OCI-LY7 (cell line): ENCODE measurements at regions of chr9 and their contacts with region 1.

Region 1: GRCh38 chr9:124868511-124869465 is 6.9 kb downstream of the ARPC5L start:
- DNase-seq: peak; percentile 89
- H3K4me3 ChIP-seq: peak overlapping the region; percentile 79
- H3K27ac ChIP-seq: peak overlapping the region; percentile 88
- H3K4me1 ChIP-seq: peaks cover 53% of the 10 kb centered on the region
- CTCF ChIP-seq: peak; percentile 77

Region 2: DNA sequence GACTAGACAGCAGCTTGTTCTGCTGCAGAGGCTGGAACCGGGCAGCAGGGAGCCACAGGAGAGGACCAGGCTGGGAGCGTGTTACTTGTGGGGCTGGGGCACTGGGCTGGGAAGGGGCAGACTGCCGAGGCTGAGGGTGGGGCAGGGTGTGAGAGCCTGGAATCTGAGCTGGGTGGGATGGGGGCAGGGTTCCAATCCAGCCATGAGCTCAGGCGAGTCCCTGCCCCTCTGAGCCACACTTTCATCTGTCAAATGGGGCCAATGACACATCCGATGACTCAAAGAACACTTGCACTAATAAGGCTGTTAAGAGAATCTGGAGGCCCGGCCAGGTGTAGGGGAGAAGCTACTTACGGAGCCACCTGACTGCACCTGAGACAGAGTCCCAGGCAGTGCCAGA is 34.2 kb before region 1 on chr9:
- CTCF ChIA-PET with region 1: no interaction called
- POLR2A ChIA-PET with region 1: no interaction called
- intact Hi-C with region 1: no loop called
- DNase-seq: no peak
- H3K4me3 ChIP-seq: no peak overlapping the region
- H3K27ac ChIP-seq: no peak overlapping the region
- H3K4me1 ChIP-seq: no peaks in the 10 kb centered on the region
- CTCF ChIP-seq: no peak

Region 3: GRCh38 chr9:124894741-124895170 is 26.0 kb after region 1 on chr9:
- CTCF ChIA-PET with region 1: no interaction called
- POLR2A ChIA-PET with region 1: interaction called, 4 read pairs
- intact Hi-C with region 1: loop called (anchors 2 kb)
- DNase-seq: peak; percentile 83
- H3K4me3 ChIP-seq: no peak overlapping the region
- H3K27ac ChIP-seq: no peak overlapping the region
- H3K4me1 ChIP-seq: peaks cover 8% of the 10 kb centered on the region
- CTCF ChIP-seq: peak; percentile 88

Region 4: DNA sequence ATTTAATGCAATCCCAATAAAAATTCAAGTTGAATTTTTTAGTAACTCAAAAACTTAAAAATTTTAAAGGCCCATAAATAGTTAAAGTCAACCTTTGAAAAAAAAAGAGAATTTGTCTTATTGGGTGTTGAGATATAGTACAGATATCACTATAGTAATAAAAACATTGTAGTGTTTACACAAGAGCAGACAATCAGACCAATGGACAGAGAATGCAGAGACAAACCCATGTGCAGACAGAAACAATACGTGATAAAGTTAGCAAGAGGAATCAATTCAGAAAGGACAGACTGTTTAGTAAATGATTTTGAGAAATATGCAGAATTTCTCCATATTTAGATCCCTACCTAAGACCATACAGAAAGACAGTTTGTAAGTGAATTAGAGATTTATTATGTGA is 38.2 kb after region 1 on chr9:
- CTCF ChIA-PET with region 1: no interaction called
- POLR2A ChIA-PET with region 1: no interaction called
- intact Hi-C with region 1: no loop called
- DNase-seq: no peak
- H3K4me3 ChIP-seq: no peak overlapping the region
- H3K27ac ChIP-seq: no peak overlapping the region
- H3K4me1 ChIP-seq: no peaks in the 10 kb centered on the region
- CTCF ChIP-seq: no peak

Region 5: GRCh38 chr9:124940693-124941453 is 72.1 kb after region 1 on chr9 and contains the start of gene GOLGA1:
- CTCF ChIA-PET with region 1: no interaction called
- POLR2A ChIA-PET with region 1: no interaction called
- intact Hi-C with region 1: loop called (anchors 2 kb)
- DNase-seq: peak; percentile 95
- H3K4me3 ChIP-seq: peak within 1 kb of the TSS; percentile 81
- H3K27ac ChIP-seq: peak within 1 kb of the TSS; percentile 91
- H3K4me1 ChIP-seq: peaks cover 53% of the 10 kb centered on the region
- CTCF ChIP-seq: no peak
- total RNA-seq, gene GOLGA1: 15.1 and 19.2 TPM in 2 replicates

Region 6: GRCh38 chr9:125143375-125144090 is 274.7 kb after region 1 on chr9 and contains the start of gene SCAI:
- CTCF ChIA-PET with region 1: no interaction called
- POLR2A ChIA-PET with region 1: no interaction called
- intact Hi-C with region 1: loop called (anchors 2 kb)
- DNase-seq: peak; percentile 99
- H3K4me3 ChIP-seq: peak within 1 kb of the TSS; percentile 82
- H3K27ac ChIP-seq: peak within 1 kb of the TSS; percentile 40
- H3K4me1 ChIP-seq: peaks cover 22% of the 10 kb centered on the region
- CTCF ChIP-seq: peak; percentile 91
- total RNA-seq, gene SCAI: 23.8 and 25.0 TPM in 2 replicates

Region 7: GRCh38 chr9:125189361-125190289 is 320.8 kb after region 1 on chr9 and contains the start of gene PPP6C:
- CTCF ChIA-PET with region 1: no interaction called
- POLR2A ChIA-PET with region 1: no interaction called
- intact Hi-C with region 1: no loop called
- DNase-seq: peak; percentile 95
- H3K4me3 ChIP-seq: peak within 1 kb of the TSS; percentile 96
- H3K27ac ChIP-seq: peak within 1 kb of the TSS; percentile 74
- H3K4me1 ChIP-seq: peaks cover 48% of the 10 kb centered on the region
- CTCF ChIP-seq: peak; percentile 76
- total RNA-seq, gene PPP6C: 18.9 and 21.4 TPM in 2 replicates